Calu3 (cell line): ENCODE measurements at regions of chr6 and their contacts with region 1.

Region 1: GRCh38 chr6:142692942-142693341 is 252.0 kb downstream of the HIVEP2 start:
- DNase-seq: peak; percentile 66
- H3K4me3 Mint-ChIP-seq: no peak overlapping the region
- H3K27ac Mint-ChIP-seq: peak overlapping the region; percentile 39
- H3K4me1 Mint-ChIP-seq: peaks cover 53% of the 10 kb centered on the region
- H3K27me3 Mint-ChIP-seq: no peaks in the 10 kb centered on the region
- CTCF ChIP-seq: peak; percentile 77

Region 2: DNA sequence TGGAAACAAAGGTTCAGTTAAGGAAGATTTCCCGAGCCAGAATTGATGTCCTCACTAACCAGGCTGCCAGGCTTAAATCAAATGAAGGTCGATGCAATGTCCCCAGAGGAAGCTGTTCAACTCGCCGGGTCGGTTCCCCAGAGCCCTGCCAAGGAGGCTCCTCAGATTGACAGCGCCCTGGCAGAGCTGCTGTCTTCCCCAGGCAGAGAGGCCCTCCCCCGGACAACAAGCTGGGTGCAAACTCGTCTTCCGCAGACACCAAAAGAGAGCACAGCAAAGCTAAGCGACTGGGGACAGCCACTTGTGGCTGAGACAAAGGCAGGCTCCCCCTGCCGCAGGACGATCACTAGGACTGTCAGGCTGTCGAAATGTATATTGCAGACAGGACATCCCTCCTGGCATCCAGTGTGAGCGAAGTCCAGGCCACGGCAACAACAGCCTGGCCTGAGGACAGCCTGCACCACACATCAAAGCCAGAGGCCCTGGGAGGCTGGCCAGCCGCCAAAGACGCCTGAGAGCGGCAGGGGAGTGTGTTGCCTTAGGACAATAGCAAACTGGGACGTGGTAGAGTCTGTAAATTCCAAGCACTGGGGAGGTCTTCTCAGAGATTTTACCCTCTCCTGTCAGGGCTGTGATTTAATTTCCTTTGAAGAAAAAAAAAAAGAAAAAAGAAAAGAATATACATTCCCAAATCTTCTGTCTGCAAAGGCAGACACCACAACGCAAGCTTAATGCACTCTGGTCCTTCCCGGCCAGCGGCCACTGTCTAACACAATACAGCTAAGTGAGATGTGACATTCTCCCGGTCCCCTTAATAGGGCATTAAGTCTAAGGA is 152.9 kb after region 1 on chr6:
- CTCF ChIA-PET with region 1: no interaction called
- intact Hi-C with region 1: loop called (anchors 10 kb)
- DNase-seq: peak; percentile 78
- H3K4me3 Mint-ChIP-seq: peak overlapping the region; percentile 66
- H3K27ac Mint-ChIP-seq: peak overlapping the region; percentile 93
- H3K4me1 Mint-ChIP-seq: peaks cover 82% of the 10 kb centered on the region
- H3K27me3 Mint-ChIP-seq: no peaks in the 10 kb centered on the region
- CTCF ChIP-seq: no peak

Region 3: GRCh38 chr6:142885182-142885867 is 192.4 kb after region 1 on chr6:
- CTCF ChIA-PET with region 1: no interaction called
- intact Hi-C with region 1: loop called (anchors 5 kb)
- DNase-seq: peak; percentile 71
- H3K4me3 Mint-ChIP-seq: peak overlapping the region; percentile 47
- H3K27ac Mint-ChIP-seq: peak overlapping the region; percentile 80
- H3K4me1 Mint-ChIP-seq: peaks cover 38% of the 10 kb centered on the region
- H3K27me3 Mint-ChIP-seq: no peaks in the 10 kb centered on the region
- CTCF ChIP-seq: no peak

Region 4: DNA sequence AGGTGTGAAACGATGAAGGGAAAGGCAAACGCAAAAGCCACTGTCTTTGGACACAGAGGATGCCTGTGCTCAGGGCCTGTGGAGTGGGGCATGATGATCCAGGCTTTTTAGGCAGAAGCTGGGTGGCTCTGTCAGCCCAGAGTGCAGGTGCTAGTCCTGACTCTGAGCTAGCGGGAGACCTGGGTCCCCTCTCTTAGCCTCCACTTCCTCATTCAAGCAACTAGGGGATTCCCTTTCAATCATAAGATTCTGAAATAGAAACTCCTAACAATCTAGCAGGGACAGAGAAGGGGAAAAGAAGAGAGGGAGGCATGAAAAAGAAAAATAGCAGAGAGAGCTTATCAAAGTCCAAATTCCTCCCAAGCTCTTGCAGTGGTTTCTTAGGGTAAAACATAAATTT is 259.7 kb after region 1 on chr6:
- CTCF ChIA-PET with region 1: no interaction called
- intact Hi-C with region 1: loop called (anchors 5 kb)
- DNase-seq: no peak
- H3K4me3 Mint-ChIP-seq: no peak overlapping the region
- H3K27ac Mint-ChIP-seq: no peak overlapping the region
- H3K4me1 Mint-ChIP-seq: peaks cover 14% of the 10 kb centered on the region
- H3K27me3 Mint-ChIP-seq: no peaks in the 10 kb centered on the region
- CTCF ChIP-seq: no peak

Region 5: GRCh38 chr6:143279385-143279784 is 586.4 kb after region 1 on chr6:
- CTCF ChIA-PET with region 1: interaction called, 4 read pairs
- intact Hi-C with region 1: loop called (anchors 1 kb)
- DNase-seq: peak; percentile 30
- H3K4me3 Mint-ChIP-seq: no peak overlapping the region
- H3K27ac Mint-ChIP-seq: no peak overlapping the region
- H3K4me1 Mint-ChIP-seq: no peaks in the 10 kb centered on the region
- H3K27me3 Mint-ChIP-seq: no peaks in the 10 kb centered on the region
- CTCF ChIP-seq: no peak